AG04449 (cell line): ENCODE measurements at regions of chr4 and their contacts with region 1.

Region 1: DNA sequence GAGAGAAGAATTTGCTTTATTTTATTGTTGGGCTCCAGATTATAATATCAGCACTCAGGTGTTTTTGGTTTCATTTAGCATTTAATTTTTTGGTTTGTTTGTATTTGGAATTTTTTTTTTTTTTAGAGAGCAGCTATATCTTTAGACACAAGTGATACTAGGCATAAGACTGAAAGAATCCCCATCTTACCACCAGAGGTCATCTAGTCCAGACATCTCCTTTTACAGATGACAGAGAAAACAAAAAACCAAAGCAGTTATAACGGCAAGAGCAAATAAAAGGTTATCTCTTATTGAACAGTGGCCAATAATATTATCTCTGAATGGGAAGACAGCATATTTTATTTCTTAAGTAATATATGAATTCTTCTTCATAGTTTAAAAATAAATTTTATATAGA is 22.8 kb downstream of the USP38 start:
- DNase-seq: no peak
- H3K4me3 ChIP-seq: no peak overlapping the region
- CTCF ChIP-seq: peak; percentile 9

Region 2: DNA sequence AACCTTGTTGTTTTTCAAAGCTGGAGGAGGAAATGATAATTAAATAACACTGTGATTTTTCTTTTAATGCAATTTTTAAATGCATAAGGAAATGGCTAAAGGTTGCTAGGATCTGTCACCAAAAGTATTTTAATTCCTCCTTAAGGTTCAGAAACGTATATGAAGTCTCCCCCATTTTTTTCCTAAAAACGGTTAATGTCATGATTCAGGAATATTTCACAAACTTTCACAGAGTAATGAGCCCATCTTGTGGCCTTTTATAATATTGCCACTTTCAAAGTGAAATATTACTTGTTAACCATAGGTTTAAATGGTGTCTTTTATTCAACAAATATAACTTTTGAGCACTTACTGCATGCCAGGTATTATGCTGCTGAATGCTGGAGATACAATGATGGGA is 122.3 kb before region 1 on chr4:
- CTCF ChIA-PET with region 1: no interaction called
- POLR2A ChIA-PET with region 1: no interaction called
- DNase-seq: no peak
- H3K4me3 ChIP-seq: no peak overlapping the region
- CTCF ChIP-seq: no peak

Region 3: GRCh38 chr4:143186649-143187048 is 20.9 kb before region 1 on chr4:
- CTCF ChIA-PET with region 1: interaction called, 13 read pairs
- POLR2A ChIA-PET with region 1: no interaction called
- DNase-seq: no peak
- H3K4me3 ChIP-seq: peak overlapping the region; percentile 88
- CTCF ChIP-seq: no peak

Region 4: DNA sequence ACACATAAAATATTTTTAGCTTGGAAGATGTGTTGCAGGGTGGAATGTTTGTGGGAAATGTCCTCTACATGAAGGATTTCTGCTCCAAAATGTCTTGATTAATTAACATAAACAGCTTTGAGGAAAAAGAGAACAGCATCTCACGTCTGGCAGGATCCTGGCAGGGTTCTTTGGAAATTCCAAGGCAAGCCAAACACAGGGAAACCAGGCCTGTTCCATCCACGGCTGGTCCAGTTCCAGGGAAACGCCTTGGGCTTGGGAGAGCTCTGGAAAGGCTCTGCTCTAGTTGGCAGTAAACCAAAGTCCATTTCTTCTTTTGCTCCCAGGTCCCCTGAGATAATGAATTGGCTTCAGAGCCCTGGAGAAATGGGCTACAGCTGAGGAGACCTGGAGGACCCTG is 86.8 kb after region 1 on chr4:
- CTCF ChIA-PET with region 1: no interaction called
- POLR2A ChIA-PET with region 1: no interaction called
- DNase-seq: no peak
- H3K4me3 ChIP-seq: no peak overlapping the region
- CTCF ChIP-seq: no peak

Region 5: GRCh38 chr4:143473334-143474126 is 266.0 kb after region 1 on chr4:
- CTCF ChIA-PET with region 1: interaction called, 11 read pairs
- POLR2A ChIA-PET with region 1: no interaction called
- DNase-seq: no peak
- H3K4me3 ChIP-seq: no peak overlapping the region
- CTCF ChIP-seq: no peak

Region 6: DNA sequence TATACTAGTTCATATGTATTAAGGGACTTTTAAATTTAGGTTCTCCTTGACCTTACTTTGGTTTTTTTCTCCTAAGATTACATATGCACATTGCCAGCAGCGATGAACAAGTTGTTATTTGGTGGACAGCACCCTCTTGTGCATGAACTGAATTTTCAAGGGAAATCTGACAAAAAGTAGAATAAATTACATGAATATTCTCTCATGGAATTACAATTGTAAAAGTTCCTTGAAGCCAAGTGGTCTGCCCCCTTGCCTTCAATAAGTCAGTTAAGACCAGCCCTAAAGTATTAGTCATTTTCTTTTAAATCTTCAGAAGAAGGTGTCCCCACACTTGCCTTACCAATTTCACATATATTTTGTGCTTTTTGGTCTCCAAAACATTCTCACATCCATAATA is 275.3 kb after region 1 on chr4:
- CTCF ChIA-PET with region 1: interaction called, 58 read pairs
- POLR2A ChIA-PET with region 1: no interaction called
- DNase-seq: peak; percentile 14
- H3K4me3 ChIP-seq: no peak overlapping the region
- CTCF ChIP-seq: peak; percentile 47

Region 7: DNA sequence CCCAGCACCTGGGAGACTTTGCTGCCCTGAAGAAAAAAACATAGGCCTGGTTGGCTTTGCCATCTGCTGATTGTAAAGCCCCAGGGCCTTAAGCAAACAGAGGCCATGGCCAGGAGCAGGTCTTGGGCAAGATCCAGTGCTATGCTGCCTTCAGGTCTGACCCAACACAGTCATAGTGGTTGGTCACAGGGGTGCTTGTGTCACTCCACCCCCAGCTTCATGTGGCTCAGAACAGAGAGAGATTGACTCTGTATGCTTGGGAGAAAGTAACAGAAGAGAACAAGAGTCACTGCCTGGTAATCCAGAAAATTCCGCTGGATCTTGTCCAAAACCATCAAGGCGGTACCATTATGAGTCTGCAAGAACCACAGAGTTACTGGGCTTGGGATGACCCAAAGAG is 281.5 kb after region 1 on chr4:
- CTCF ChIA-PET with region 1: interaction called, 58 read pairs
- POLR2A ChIA-PET with region 1: no interaction called
- DNase-seq: no peak
- H3K4me3 ChIP-seq: no peak overlapping the region
- CTCF ChIP-seq: no peak